Activated CD4-positive, alpha-beta T cell treated with anti-CD3 and anti-CD28 coated beads for 36 hours (primary cell): ENCODE measurements at regions of chr1 and their contacts with region 1.

Region 1: DNA sequence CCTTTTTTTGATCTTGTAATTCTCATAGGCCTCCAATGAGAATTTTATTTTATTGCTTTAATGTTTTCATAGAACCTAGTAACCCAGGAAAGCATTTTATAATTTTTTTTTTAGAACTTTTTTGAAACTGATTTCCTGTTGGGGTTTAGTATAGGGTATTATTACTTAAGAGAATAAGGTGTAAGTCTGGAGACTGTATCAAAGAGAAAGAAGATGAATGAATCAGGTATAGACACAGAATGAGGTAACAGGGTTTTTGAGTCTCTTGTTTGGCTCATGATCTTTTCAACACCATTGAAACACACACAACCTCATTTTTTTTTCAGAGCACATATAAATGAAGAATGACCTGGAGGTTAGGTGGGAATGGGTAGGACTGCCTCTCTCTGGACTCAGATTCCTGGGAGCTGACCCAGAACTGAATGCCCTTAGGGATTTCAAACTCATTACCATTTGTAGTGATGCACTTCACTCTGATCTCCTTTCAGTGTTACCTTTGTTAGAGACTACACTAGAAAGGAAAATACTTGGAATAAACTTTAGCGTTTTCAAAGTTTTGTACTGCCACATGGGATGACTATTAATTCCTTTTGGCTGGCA is 51.0 kb downstream of the EPB41 start:
- DNase-seq: no peak
- ATAC-seq: peak; percentile 34
- H3K4me3 Mint-ChIP-seq: no peak overlapping the region
- H3K27ac Mint-ChIP-seq: peak overlapping the region; percentile 37
- H3K4me1 Mint-ChIP-seq: peaks cover 58% of the 10 kb centered on the region
- H3K27me3 Mint-ChIP-seq: no peaks in the 10 kb centered on the region

Region 2: GRCh38 chr1:28926629-28927265 is 38.6 kb before region 1 on chr1:
- CTCF ChIA-PET with region 1: interaction called, 3 read pairs
- POLR2A ChIA-PET with region 1: no interaction called
- intact Hi-C with region 1: loop called in 1 of 2 experiments (anchors 1 kb)
- DNase-seq: peak; percentile 24
- ATAC-seq: peak; percentile 89
- H3K4me3 Mint-ChIP-seq: peak overlapping the region; percentile 53
- H3K27ac Mint-ChIP-seq: peak overlapping the region; percentile 94
- H3K4me1 Mint-ChIP-seq: peaks cover 56% of the 10 kb centered on the region
- H3K27me3 Mint-ChIP-seq: no peaks in the 10 kb centered on the region

Region 3: DNA sequence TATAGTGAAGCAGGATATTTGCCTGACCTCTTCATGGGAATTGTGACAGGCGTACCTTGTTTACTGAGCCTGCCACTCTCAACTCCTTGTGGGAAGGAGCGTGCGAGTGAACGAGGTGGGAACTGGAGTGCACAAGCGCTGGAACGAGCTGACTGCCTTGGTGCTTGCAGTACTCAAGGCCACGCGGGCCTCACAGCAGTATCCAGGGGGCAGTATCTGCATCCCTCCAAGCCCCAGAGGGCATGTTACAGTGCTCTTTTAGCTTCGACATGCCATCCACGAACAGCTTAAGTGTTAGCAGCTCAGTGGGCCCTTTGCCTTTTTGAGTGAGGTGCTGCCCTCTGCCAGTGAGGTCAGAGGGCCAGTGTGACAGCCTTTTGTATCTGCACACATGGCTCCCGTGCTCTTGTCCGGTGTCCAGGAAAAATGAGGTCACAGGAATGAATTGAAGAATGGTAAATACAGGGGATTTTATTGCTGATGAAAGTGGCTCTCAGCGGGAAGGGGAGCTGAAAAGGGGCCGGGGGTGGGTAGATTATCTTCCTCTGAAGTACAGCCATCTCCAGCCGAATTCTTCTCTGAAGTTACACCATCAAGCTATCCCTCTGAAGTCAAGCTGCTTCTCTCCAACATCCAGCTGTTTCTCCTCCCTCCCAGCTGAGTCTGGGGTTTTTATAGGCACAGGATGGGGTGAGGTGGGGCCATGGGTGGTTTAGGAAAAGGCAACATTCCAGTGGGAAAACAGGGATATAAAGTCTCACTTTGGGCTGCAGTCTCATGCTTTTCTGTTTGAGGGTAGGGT is 18.3 kb after region 1 on chr1:
- CTCF ChIA-PET with region 1: interaction called, 3 read pairs
- POLR2A ChIA-PET with region 1: interaction called, 4 read pairs
- intact Hi-C with region 1: loop called in 1 of 2 experiments (anchors 2 kb)
- DNase-seq: no peak
- ATAC-seq: no peak
- H3K4me3 Mint-ChIP-seq: no peak overlapping the region
- H3K27ac Mint-ChIP-seq: peak overlapping the region; percentile 31
- H3K4me1 Mint-ChIP-seq: peaks cover 56% of the 10 kb centered on the region
- H3K27me3 Mint-ChIP-seq: no peaks in the 10 kb centered on the region